B cell (primary cell): ENCODE measurements at regions of chr2 and their contacts with region 1.

Region 1: GRCh38 chr2:219177552-219178376 is at the start of gene RETREG2:
- DNase-seq: peak; percentile 97
- ATAC-seq: peak; percentile 44
- H3K4me3 ChIP-seq: peak within 1 kb of the TSS; percentile 87 to 97 (median 95)
- H3K4me3 Mint-ChIP-seq: peak within 1 kb of the TSS; percentile 99
- H3K27ac ChIP-seq: peak within 1 kb of the TSS; percentile 94 to 97
- H3K27ac Mint-ChIP-seq: peak within 1 kb of the TSS; percentile 99
- H3K4me1 ChIP-seq: peaks cover 17 to 48% of the 10 kb centered on the region in 2 donors
- H3K4me1 Mint-ChIP-seq: peaks cover 46% of the 10 kb centered on the region
- H3K27me3 ChIP-seq: no peaks in the 10 kb centered on the region
- H3K27me3 Mint-ChIP-seq: no peaks in the 10 kb centered on the region
- CTCF ChIP-seq: peak; percentile 55
- total RNA-seq, gene RETREG2: 86.3 and 102 TPM in 2 replicates

Region 2: GRCh38 chr2:218568190-218569037 is 609.4 kb before region 1 on chr2 and contains the starts of genes CNOT9 and USP37:
- CTCF ChIA-PET with region 1: no interaction called
- POLR2A ChIA-PET with region 1: no interaction called
- intact Hi-C with region 1: loop called (anchors 2 kb)
- DNase-seq: peak; percentile 100
- ATAC-seq: peak; percentile 92
- H3K4me3 ChIP-seq: peak within 1 kb of the TSS; percentile 65 to 91 (median 84)
- H3K4me3 Mint-ChIP-seq: peak within 1 kb of the TSS; percentile 96
- H3K27ac ChIP-seq: peak within 1 kb of the TSS; percentile 93 to 95
- H3K27ac Mint-ChIP-seq: peak within 1 kb of the TSS; percentile 100
- H3K4me1 ChIP-seq: peaks cover 29 to 31% of the 10 kb centered on the region in 2 donors
- H3K4me1 Mint-ChIP-seq: peaks cover 56% of the 10 kb centered on the region
- H3K27me3 ChIP-seq: no peaks in the 10 kb centered on the region
- H3K27me3 Mint-ChIP-seq: no peaks in the 10 kb centered on the region
- CTCF ChIP-seq: no peak
- total RNA-seq, gene CNOT9: 54.5 and 66.9 TPM in 2 replicates
- total RNA-seq, gene USP37: 29.0 and 32.4 TPM in 2 replicates

Region 3: DNA sequence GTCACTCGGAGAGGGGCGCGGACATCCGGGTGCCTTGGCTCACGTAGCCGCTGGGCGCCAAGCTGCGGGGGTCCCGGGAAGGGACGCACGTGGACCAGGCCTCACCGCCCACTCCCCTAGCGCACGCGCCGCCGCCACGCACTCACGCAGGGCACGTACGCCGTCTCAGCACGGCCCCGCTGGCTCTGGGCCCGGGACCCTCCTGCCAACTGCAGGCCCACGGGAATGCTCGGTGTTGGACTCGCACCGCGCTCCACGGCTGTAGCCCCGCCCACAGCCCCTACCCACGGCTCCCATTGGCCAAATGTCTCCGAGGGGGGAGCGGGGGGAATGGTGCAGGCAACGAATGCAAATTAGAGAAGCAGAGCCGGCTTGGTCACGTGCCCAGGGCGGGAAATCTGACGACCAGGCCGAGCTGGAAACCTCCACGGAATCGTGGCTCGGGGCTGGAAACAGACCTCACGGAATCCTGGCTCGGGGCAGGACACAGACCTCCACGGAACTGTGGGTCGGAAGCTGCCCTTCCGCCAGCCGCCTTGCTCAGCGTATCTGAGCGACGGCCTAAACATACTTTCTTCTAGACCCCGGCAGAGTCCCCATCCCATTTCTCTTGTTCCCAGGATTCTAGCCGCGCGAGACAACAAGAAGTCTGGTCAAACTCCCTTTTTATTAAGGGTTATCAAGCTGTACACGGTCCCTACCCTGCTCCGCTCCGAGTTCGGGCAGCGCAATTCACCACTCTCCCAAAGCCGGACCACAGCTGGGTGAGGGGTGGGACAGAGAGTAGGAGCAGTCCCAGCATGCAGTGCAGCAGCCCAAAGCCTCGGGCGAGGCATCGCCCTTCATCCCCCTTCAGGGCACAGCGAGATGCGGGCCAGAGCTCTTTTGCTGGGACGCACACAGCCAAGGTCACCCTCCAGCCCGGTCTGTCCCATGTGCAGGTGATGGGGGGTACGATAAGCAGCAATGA is 41.3 kb after region 1 on chr2 and contains the start of gene ABCB6:
- CTCF ChIA-PET with region 1: interaction called, 19 read pairs
- POLR2A ChIA-PET with region 1: interaction called, 5 read pairs
- intact Hi-C with region 1: loop called (anchors 1 kb)
- DNase-seq: peak; percentile 92
- ATAC-seq: peak; percentile 95
- H3K4me3 ChIP-seq: peak within 1 kb of the TSS; percentile 51 to 74 (median 66)
- H3K4me3 Mint-ChIP-seq: peak within 1 kb of the TSS; percentile 87
- H3K27ac ChIP-seq: peak within 1 kb of the TSS; percentile 0 to 55
- H3K27ac Mint-ChIP-seq: peak within 1 kb of the TSS; percentile 86
- H3K4me1 ChIP-seq: peaks cover 17 to 21% of the 10 kb centered on the region in 2 donors
- H3K4me1 Mint-ChIP-seq: peaks cover 20% of the 10 kb centered on the region
- H3K27me3 ChIP-seq: no peaks in the 10 kb centered on the region
- H3K27me3 Mint-ChIP-seq: no peaks in the 10 kb centered on the region
- CTCF ChIP-seq: no peak
- total RNA-seq, gene ABCB6: 10.5 and 12.3 TPM in 2 replicates

Region 4: GRCh38 chr2:219253753-219254590 is 76.2 kb after region 1 on chr2 and contains the start of gene TUBA4A:
- CTCF ChIA-PET with region 1: interaction called, 13 read pairs
- POLR2A ChIA-PET with region 1: interaction called, 29 read pairs
- intact Hi-C with region 1: loop called (anchors 1 kb)
- DNase-seq: peak; percentile 93
- ATAC-seq: peak; percentile 72
- H3K4me3 ChIP-seq: peak within 1 kb of the TSS; percentile 83 to 97 (median 90)
- H3K4me3 Mint-ChIP-seq: peak within 1 kb of the TSS; percentile 87
- H3K27ac ChIP-seq: peak within 1 kb of the TSS; percentile 93 to 94
- H3K27ac Mint-ChIP-seq: peak within 1 kb of the TSS; percentile 96
- H3K4me1 ChIP-seq: peaks cover 34 to 44% of the 10 kb centered on the region in 2 donors
- H3K4me1 Mint-ChIP-seq: peaks cover 49% of the 10 kb centered on the region
- H3K27me3 ChIP-seq: no peaks in the 10 kb centered on the region
- H3K27me3 Mint-ChIP-seq: no peaks in the 10 kb centered on the region
- CTCF ChIP-seq: no peak
- total RNA-seq, gene TUBA4A: 196 and 213 TPM in 2 replicates

Region 5: GRCh38 chr2:219498280-219499057 is 320.7 kb after region 1 on chr2 and contains the start of gene GMPPA:
- CTCF ChIA-PET with region 1: no interaction called
- POLR2A ChIA-PET with region 1: no interaction called
- intact Hi-C with region 1: loop called (anchors 5 kb)
- DNase-seq: peak; percentile 94
- ATAC-seq: peak; percentile 96
- H3K4me3 ChIP-seq: peak within 1 kb of the TSS; percentile 65 to 90 (median 79)
- H3K4me3 Mint-ChIP-seq: peak within 1 kb of the TSS; percentile 93
- H3K27ac ChIP-seq: peak within 1 kb of the TSS in 1 of 2 donors; percentile 84
- H3K27ac Mint-ChIP-seq: peak within 1 kb of the TSS; percentile 87
- H3K4me1 ChIP-seq: peaks cover 38% of the 10 kb centered on the region in 2 donors
- H3K4me1 Mint-ChIP-seq: peaks cover 32% of the 10 kb centered on the region
- H3K27me3 ChIP-seq: peaks cover 0 to 46% (median 23%) of the 10 kb centered on the region in 4 experiments
- H3K27me3 Mint-ChIP-seq: peaks cover 33% of the 10 kb centered on the region
- CTCF ChIP-seq: no peak
- total RNA-seq, gene GMPPA: 27.8 and 32.0 TPM in 2 replicates